ENCODE measurements at regions of chr3 and their contacts with region 1.

Region 1: GRCh38 chr3:111668912-111669488 is 73.9 kb upstream of the ZBED2 start:
- DNase-seq: peak; percentile 47
- ATAC-seq: peak; percentile 88
- H3K4me3 ChIP-seq: no peak overlapping the region
- H3K27ac ChIP-seq: no peak overlapping the region
- H3K4me1 ChIP-seq: peaks cover 14 to 46% of the 10 kb centered on the region in 2 experiments; a peak in 3 of 4 replicates
- H3K27me3 ChIP-seq: no peaks in the 10 kb centered on the region
- CTCF ChIP-seq: peak; percentile 57 to 89 (median 81)
- POLR2A ChIP-seq: no peak
- RAD21 ChIP-seq: peak; percentile 92

Region 2: DNA sequence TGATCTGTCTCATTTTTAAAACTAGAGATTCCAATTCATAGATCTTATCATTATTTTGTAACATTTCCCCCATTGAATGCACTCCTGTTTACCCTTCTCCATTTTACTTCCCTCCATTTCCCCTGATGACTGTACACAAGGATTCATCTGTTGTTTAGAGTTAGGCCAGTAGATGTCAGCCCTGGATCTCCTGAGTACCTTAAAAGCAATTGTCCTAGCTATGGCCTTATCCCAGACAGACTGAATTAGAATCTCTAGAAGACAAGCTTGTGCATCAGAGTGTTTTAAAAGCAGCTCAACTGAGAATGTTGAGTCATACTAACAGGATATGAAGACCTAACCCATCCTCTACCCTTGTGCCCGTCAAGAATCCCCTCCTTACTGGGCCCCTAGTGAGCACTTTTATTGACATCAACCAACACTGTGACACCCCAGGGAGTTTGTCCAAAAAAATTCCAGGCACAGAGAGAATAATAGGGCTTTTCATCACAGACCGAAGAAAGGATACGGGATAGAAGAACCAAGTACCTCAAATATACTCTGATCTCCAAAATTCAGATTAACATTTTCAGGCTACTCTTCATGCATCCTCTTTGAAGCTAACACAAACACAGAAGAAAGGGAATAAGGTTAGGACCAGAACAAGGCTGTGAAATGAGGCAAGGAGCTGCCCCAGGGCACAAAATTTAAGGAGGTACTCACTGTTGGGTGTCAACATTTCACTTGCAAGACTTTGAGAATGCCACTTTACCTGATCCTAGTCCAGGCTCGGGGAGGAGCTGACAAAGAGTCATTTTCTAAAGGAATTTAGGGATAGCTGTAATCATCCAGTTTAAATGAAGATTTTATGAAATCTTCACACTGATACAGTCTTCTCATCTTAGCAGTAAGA is 91.0 kb before region 1 on chr3:
- CTCF ChIA-PET with region 1: interaction called, 13 read pairs
- POLR2A ChIA-PET with region 1: no interaction called
- RAD21 ChIA-PET with region 1: interaction called, 3 to 4 read pairs
- intact Hi-C with region 1: no loop called
- DNase-seq: peak; percentile 69
- ATAC-seq: peak; percentile 83
- H3K4me3 ChIP-seq: no peak overlapping the region
- H3K27ac ChIP-seq: peak overlapping the region; percentile 7; the same call in 1 of the 2 replicates
- H3K4me1 ChIP-seq: peaks cover 30 to 64% of the 10 kb centered on the region in 2 experiments
- H3K27me3 ChIP-seq: no peaks in the 10 kb centered on the region
- CTCF ChIP-seq: peak; percentile 60 to 79 (median 77)
- POLR2A ChIP-seq: no peak
- RAD21 ChIP-seq: peak; percentile 92

Region 3: GRCh38 chr3:111691293-111691909 is 22.4 kb after region 1 on chr3:
- CTCF ChIA-PET with region 1: interaction called, 43 read pairs
- POLR2A ChIA-PET with region 1: interaction called, 3 read pairs
- RAD21 ChIA-PET with region 1: interaction called in 1 of 2 experiments, 5 read pairs
- intact Hi-C with region 1: no loop called
- DNase-seq: no peak
- ATAC-seq: peak; percentile 70
- H3K4me3 ChIP-seq: no peak overlapping the region
- H3K27ac ChIP-seq: no peak overlapping the region
- H3K4me1 ChIP-seq: peaks cover 12 to 70% of the 10 kb centered on the region in 2 experiments
- H3K27me3 ChIP-seq: no peaks in the 10 kb centered on the region
- CTCF ChIP-seq: peak; percentile 39 to 65 (median 52); a peak in 5 of 6 replicates
- POLR2A ChIP-seq: no peak
- RAD21 ChIP-seq: peak; percentile 78

Region 4: DNA sequence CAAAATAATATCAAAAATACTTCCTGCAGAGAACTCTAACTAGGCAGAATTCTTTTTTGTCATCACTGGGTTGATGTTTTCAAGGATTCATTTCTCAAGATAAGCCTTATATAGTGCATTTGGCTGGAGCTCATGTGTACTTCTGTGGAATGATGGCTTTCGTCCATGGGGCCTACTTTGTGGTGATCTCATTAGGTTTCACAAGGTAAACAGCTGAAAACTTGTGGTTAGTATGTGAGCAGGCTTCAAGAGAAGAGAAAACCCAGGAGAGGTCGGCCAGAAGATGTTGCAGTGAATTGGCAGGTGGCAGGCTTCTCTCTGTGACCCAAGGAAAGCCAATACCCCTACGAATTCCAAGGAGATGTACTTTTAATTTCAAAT is 68.7 kb after region 1 on chr3:
- CTCF ChIA-PET with region 1: no interaction called
- POLR2A ChIA-PET with region 1: no interaction called
- RAD21 ChIA-PET with region 1: no interaction called
- intact Hi-C with region 1: no loop called
- DNase-seq: no peak
- ATAC-seq: no peak
- H3K4me3 ChIP-seq: no peak overlapping the region
- H3K27ac ChIP-seq: peak overlapping the region; percentile 3; the same call in 1 of the 2 replicates
- H3K4me1 ChIP-seq: peaks cover 59 to 88% of the 10 kb centered on the region in 2 experiments
- H3K27me3 ChIP-seq: no peaks in the 10 kb centered on the region
- CTCF ChIP-seq: no peak
- POLR2A ChIP-seq: no peak
- RAD21 ChIP-seq: no peak

Region 5: GRCh38 chr3:111859974-111860859 is 191.2 kb after region 1 on chr3:
- CTCF ChIA-PET with region 1: interaction called, 6 read pairs
- POLR2A ChIA-PET with region 1: no interaction called
- RAD21 ChIA-PET with region 1: no interaction called
- intact Hi-C with region 1: loop called (anchors 2 kb)
- DNase-seq: peak; percentile 82
- ATAC-seq: peak; percentile 56
- H3K4me3 ChIP-seq: peak overlapping the region; percentile 84 to 88
- H3K27ac ChIP-seq: peak overlapping the region; percentile 96
- H3K4me1 ChIP-seq: peaks cover 56 to 80% of the 10 kb centered on the region in 2 experiments
- H3K27me3 ChIP-seq: no peaks in the 10 kb centered on the region
- CTCF ChIP-seq: peak; percentile 36 to 50 (median 39); a peak in 5 of 6 replicates
- POLR2A ChIP-seq: peak; percentile 2
- RAD21 ChIP-seq: peak; percentile 69

Measured in HCT116 (cell line).